Heart left ventricle (tissue), 16 donors: ENCODE measurements at regions of chr14 and their contacts with region 1.

Region 1: DNA sequence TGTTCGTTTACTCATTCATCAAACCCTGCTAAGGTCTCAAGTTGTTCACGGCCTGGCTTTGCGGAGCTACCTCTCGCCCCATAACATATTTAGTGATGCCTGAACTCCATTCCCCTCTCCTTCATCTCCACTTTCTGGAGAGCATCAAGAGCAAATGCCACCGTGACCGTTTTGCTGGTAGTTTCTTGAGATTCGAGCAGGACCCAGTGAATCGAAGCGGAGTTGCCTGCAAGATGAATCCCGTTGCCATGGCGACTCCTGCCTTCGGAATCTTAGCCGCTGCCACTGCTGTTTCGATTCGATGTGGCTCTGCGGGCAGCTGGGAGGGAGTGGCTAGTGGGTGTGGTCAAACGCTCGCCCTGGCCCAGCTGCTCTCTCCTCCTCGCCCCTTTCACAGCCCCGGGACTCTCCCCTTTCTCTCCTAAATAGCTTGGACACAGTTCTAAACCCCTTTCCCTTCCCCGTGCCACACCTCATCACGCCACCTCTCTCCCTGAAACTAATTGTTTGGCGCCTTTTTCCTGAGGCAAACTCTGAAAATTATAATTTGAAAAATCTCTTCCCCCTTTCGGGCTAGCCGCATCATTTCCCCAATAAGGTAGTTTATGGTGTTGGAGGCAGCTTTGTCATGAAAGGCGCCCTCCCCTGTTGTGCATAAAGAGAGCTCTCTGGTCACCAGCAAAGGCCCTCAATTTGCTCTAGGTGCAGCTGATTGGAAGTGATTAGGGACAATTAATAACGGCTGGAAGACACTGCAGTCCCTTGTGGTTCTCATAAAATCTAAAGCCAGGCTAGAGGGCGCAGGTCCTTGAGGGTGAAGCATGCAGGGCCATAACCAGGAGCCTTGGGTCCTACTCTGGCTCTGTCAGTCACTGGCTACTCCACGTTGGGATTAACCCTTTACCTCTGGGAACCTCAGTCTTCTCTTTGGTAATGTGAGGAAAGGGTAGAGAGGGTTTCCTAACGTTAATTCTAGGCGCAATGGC is 1.6 kb downstream of the DAAM1 start:
- DNase-seq: peak; percentile 83 to 91 (median 85)
- ATAC-seq: peak in 3 of 4 donors; percentile 31 to 36 (median 31)
- H3K4me3 ChIP-seq: peak overlapping the region; percentile 70 to 95 (median 86)
- H3K27ac ChIP-seq: peak overlapping the region; percentile 87 to 97 (median 94)
- H3K4me1 ChIP-seq: peaks cover 0 to 58% (median 45%) of the 10 kb centered on the region in 12 donors
- H3K27me3 ChIP-seq: peaks cover 0 to 3% (median 0%) of the 10 kb centered on the region in 9 donors
- CTCF ChIP-seq: peak in 3 of 12 donors; percentile 7 to 33 (median 26)
- POLR2A ChIP-seq: no peak

Region 2: GRCh38 chr14:59132796-59133494 is 57.1 kb before region 1 on chr14:
- intact Hi-C with region 1: loop called in 2 of 10 experiments (anchors 5 kb)
- DNase-seq: no peak
- ATAC-seq: peak in 1 of 4 donors; percentile 61
- H3K4me3 ChIP-seq: no peak overlapping the region
- H3K27ac ChIP-seq: no peak overlapping the region
- H3K4me1 ChIP-seq: peaks cover 0 to 11% (median 0%) of the 10 kb centered on the region in 12 donors
- H3K27me3 ChIP-seq: no peaks in the 10 kb centered on the region
- CTCF ChIP-seq: peak in 5 of 12 donors; percentile 13 to 40 (median 18)
- POLR2A ChIP-seq: no peak

Region 3: GRCh38 chr14:59245809-59246295 is 55.8 kb after region 1 on chr14:
- intact Hi-C with region 1: loop called in 7 of 10 experiments (anchors 2 to 10 kb)
- DNase-seq: no peak
- ATAC-seq: no peak
- H3K4me3 ChIP-seq: no peak overlapping the region
- H3K27ac ChIP-seq: no peak overlapping the region
- H3K4me1 ChIP-seq: peaks cover 0 to 52% (median 36%) of the 10 kb centered on the region in 12 donors
- H3K27me3 ChIP-seq: no peaks in the 10 kb centered on the region
- CTCF ChIP-seq: no peak
- POLR2A ChIP-seq: no peak

Region 4: GRCh38 chr14:59313144-59313651 is 123.1 kb after region 1 on chr14:
- intact Hi-C with region 1: loop called in 3 of 10 experiments (anchors 10 kb)
- DNase-seq: no peak
- ATAC-seq: no peak
- H3K4me3 ChIP-seq: no peak overlapping the region
- H3K27ac ChIP-seq: peak overlapping the region in 4 of 12 donors; percentile 21 to 43 (median 27)
- H3K4me1 ChIP-seq: peaks cover 0 to 81% (median 56%) of the 10 kb centered on the region in 12 donors
- H3K27me3 ChIP-seq: no peaks in the 10 kb centered on the region
- CTCF ChIP-seq: no peak
- POLR2A ChIP-seq: no peak

Region 5: GRCh38 chr14:59360923-59361794 is 171.1 kb after region 1 on chr14:
- intact Hi-C with region 1: loop called in 2 of 10 experiments (anchors 5 kb)
- DNase-seq: peak; percentile 75 to 92 (median 86)
- ATAC-seq: peak; percentile 68 to 77 (median 74)
- H3K4me3 ChIP-seq: peak overlapping the region in 5 of 12 donors; percentile 4 to 37 (median 21)
- H3K27ac ChIP-seq: peak overlapping the region; percentile 61 to 93 (median 84)
- H3K4me1 ChIP-seq: peaks cover 0 to 83% (median 60%) of the 10 kb centered on the region in 12 donors
- H3K27me3 ChIP-seq: no peaks in the 10 kb centered on the region
- CTCF ChIP-seq: peak in 3 of 12 donors; percentile 9 to 24 (median 19)
- POLR2A ChIP-seq: no peak

Region 6: GRCh38 chr14:59377991-59378601 is 188.0 kb after region 1 on chr14:
- intact Hi-C with region 1: no loop called
- DNase-seq: no peak
- ATAC-seq: peak; percentile 59 to 74 (median 71)
- H3K4me3 ChIP-seq: no peak overlapping the region
- H3K27ac ChIP-seq: peak overlapping the region in 8 of 12 donors; percentile 36 to 75 (median 59)
- H3K4me1 ChIP-seq: peaks cover 0 to 34% (median 15%) of the 10 kb centered on the region in 12 donors
- H3K27me3 ChIP-seq: no peaks in the 10 kb centered on the region
- CTCF ChIP-seq: no peak
- POLR2A ChIP-seq: no peak

Region 7: DNA sequence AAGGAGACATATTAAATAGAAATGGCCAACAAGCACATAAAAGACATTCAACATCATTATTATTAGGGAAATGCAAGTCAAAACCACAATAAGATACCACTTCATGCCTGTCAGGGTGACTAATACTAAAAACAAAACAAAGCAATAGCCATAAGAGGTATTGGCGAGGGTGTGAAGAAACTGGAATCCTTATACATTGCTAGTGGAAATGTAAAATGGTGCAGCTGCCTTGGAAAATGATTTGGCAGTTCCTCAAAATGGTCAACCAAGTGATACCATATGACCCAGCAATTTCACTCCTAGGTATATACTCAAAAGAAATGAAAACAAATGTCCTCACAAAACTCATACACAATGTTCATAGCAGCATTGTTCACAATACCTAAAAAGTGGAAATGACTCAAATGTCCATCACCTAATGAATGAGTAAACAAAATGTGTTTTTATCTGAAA is 248.1 kb after region 1 on chr14:
- intact Hi-C with region 1: loop called in 4 of 10 experiments (anchors 5 kb)
- DNase-seq: no peak
- ATAC-seq: no peak
- H3K4me3 ChIP-seq: no peak overlapping the region
- H3K27ac ChIP-seq: peak overlapping the region in 9 of 12 donors; percentile 0 to 67 (median 39)
- H3K4me1 ChIP-seq: peaks cover 0 to 38% (median 6%) of the 10 kb centered on the region in 12 donors
- H3K27me3 ChIP-seq: no peaks in the 10 kb centered on the region
- CTCF ChIP-seq: no peak
- POLR2A ChIP-seq: no peak